Lower leg skin (tissue), 4 donors: ENCODE measurements at regions of chr9 and their contacts with region 1.

Region 1: DNA sequence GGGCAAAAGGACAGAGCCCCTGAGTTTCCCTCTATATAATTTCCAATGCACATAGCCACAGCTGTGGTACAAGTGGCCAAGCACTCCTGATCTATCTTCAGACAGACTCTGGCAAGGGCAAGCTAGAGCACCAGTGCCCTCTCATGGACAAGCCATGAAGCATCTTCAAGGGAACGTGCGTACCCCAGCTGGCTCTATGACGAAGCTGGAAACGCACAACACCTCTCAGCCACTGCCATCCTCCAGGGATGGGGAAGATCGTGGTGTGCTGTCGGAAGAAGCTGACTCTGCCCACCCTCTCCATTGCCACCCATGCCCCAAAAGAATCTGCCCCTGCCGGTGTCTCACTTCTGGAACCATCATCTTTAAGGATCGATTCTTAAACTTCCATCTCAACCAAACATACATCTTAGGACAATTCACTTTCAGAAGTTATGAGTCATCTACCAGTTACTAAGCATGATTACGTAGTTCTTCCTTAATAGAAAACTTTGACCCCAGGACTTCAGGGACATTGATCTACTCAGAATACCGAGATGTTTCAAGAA is 482.9 kb downstream of the AGTPBP1 start:
- DNase-seq: peak; percentile 49 to 86
- H3K4me3 ChIP-seq: no peak overlapping the region
- CTCF ChIP-seq: peak in 1 of 3 donors; percentile 43
- POLR2A ChIP-seq: no peak

Region 2: DNA sequence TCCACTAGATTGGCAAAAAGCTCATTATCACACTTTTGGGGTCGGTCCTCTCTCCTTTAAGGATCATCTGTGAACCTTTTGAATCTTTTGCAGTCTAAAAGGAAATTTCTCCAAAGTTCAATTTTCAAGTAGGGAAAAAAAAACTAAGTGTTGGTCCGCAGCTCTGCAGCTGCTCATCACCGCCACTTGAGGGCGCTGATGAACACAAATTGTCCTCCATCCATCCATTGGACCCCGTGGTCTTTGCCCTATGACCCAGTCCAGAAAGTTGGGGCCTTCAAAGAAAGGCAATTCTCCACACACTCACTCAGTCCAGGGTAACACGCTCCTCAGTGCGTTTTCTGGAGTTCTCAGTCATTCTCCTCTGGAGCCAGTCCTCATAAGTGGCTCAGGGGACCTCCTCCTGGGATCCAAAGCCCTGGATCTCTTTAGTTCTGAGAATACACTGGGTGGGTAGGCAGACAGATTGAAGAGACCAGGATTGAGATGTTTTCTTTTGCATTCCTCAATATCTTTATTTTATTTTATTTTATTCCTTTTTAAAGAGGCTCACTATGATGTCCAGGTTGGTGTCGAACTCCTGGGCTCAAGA is 854.7 kb before region 1 on chr9:
- intact Hi-C with region 1: loop called (anchors 10 kb)
- DNase-seq: no peak
- H3K4me3 ChIP-seq: no peak overlapping the region
- CTCF ChIP-seq: no peak
- POLR2A ChIP-seq: no peak

Region 3: GRCh38 chr9:84701801-84702200 is 557.1 kb before region 1 on chr9:
- intact Hi-C with region 1: loop called (anchors 10 kb)
- DNase-seq: no peak
- H3K4me3 ChIP-seq: no peak overlapping the region
- CTCF ChIP-seq: no peak
- POLR2A ChIP-seq: no peak